ENCODE measurements at regions of chr2 and their contacts with region 1.

Region 1: DNA sequence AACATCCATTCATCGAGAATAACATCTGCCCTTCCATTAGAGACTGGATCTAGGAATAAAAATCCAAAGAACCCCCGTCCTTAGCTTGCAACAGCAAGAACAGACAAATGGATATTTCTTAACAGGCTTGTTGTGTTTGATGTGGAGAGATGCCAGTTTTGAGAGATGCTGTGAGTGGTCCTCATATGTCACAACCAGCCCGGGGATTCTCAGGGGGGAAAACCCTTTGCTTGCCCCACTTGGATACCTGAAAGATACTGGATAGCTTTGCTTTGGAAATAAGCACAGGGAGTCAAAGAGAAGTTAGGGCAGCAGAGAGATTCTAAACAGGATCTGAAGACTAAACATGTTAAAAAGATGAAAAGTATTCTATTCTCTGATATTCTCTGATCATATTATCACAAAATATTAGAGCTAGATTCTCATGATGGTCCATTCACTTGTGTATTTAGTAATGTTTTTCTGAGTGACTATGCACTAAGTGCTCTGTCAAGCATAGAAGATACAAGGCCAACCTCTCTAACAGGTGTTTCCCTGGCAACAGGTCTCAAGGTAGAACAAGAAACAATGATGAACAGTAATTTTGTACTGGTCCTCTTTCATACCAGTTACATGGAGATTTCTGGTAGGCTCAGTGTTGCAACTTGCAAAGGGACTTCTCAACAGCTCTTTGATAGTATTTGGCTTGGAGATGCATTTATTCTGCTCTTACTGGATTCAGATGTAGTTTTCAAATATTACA is 348.2 kb downstream of the MYCN start:
- DNase-seq: no peak
- ATAC-seq: no peak
- H3K4me3 ChIP-seq: no peak overlapping the region
- H3K4me3 Mint-ChIP-seq: no peak overlapping the region
- H3K27ac ChIP-seq: no peak overlapping the region
- H3K27ac Mint-ChIP-seq: no peak overlapping the region
- H3K4me1 ChIP-seq: no peaks in the 10 kb centered on the region
- H3K4me1 Mint-ChIP-seq: no peaks in the 10 kb centered on the region
- H3K27me3 ChIP-seq: no peaks in the 10 kb centered on the region
- H3K27me3 Mint-ChIP-seq: peaks cover 0 to 22% (median 0%) of the 10 kb centered on the region in 5 donors

Region 2: GRCh38 chr2:16257322-16258028 is 31.1 kb before region 1 on chr2:
- CTCF ChIA-PET with region 1: no interaction called
- POLR2A ChIA-PET with region 1: no interaction called
- intact Hi-C with region 1: no loop called
- DNase-seq: no peak
- ATAC-seq: no peak
- H3K4me3 ChIP-seq: no peak overlapping the region
- H3K4me3 Mint-ChIP-seq: peak overlapping the region in 1 of 10 donors; percentile 41
- H3K27ac ChIP-seq: no peak overlapping the region
- H3K27ac Mint-ChIP-seq: no peak overlapping the region
- H3K4me1 ChIP-seq: no peaks in the 10 kb centered on the region
- H3K4me1 Mint-ChIP-seq: peaks cover 0 to 17% (median 8%) of the 10 kb centered on the region in 7 donors
- H3K27me3 ChIP-seq: no peaks in the 10 kb centered on the region
- H3K27me3 Mint-ChIP-seq: peaks cover 0 to 21% (median 6%) of the 10 kb centered on the region in 5 donors

Region 3: GRCh38 chr2:16311521-16312440 is 23.2 kb after region 1 on chr2:
- CTCF ChIA-PET with region 1: no interaction called
- POLR2A ChIA-PET with region 1: no interaction called
- intact Hi-C with region 1: no loop called
- DNase-seq: no peak
- ATAC-seq: no peak
- H3K4me3 ChIP-seq: no peak overlapping the region
- H3K4me3 Mint-ChIP-seq: no peak overlapping the region
- H3K27ac ChIP-seq: no peak overlapping the region
- H3K27ac Mint-ChIP-seq: no peak overlapping the region
- H3K4me1 ChIP-seq: no peaks in the 10 kb centered on the region
- H3K4me1 Mint-ChIP-seq: peaks cover 0 to 3% (median 0%) of the 10 kb centered on the region in 7 donors
- H3K27me3 ChIP-seq: no peaks in the 10 kb centered on the region
- H3K27me3 Mint-ChIP-seq: peaks cover 3 to 25% (median 7%) of the 10 kb centered on the region in 5 donors

Region 4: GRCh38 chr2:16321872-16322271 is 33.3 kb after region 1 on chr2:
- CTCF ChIA-PET with region 1: no interaction called
- POLR2A ChIA-PET with region 1: no interaction called
- intact Hi-C with region 1: loop called in 1 of 2 experiments (anchors 1 kb)
- DNase-seq: no peak
- ATAC-seq: no peak
- H3K4me3 ChIP-seq: no peak overlapping the region
- H3K4me3 Mint-ChIP-seq: no peak overlapping the region
- H3K27ac ChIP-seq: no peak overlapping the region
- H3K27ac Mint-ChIP-seq: no peak overlapping the region
- H3K4me1 ChIP-seq: no peaks in the 10 kb centered on the region
- H3K4me1 Mint-ChIP-seq: peaks cover 0 to 2% (median 0%) of the 10 kb centered on the region in 7 donors
- H3K27me3 ChIP-seq: no peaks in the 10 kb centered on the region
- H3K27me3 Mint-ChIP-seq: peaks cover 0 to 5% (median 0%) of the 10 kb centered on the region in 5 donors